CD8-positive, alpha-beta T cell (primary cell): ENCODE measurements at regions of chr4 and their contacts with region 1.

Region 1: GRCh38 chr4:77075869-77076799 is at the start of gene CCNI:
- DNase-seq: peak; percentile 85 to 97 (median 92)
- ATAC-seq: peak; percentile 70
- H3K4me3 ChIP-seq: peak within 1 kb of the TSS; percentile 90 to 98
- H3K4me3 Mint-ChIP-seq: no peak within 1 kb of the TSS
- H3K27ac ChIP-seq: peak within 1 kb of the TSS; percentile 99 to 100
- H3K27ac Mint-ChIP-seq: peak within 1 kb of the TSS; percentile 100
- H3K4me1 ChIP-seq: peaks cover 42% of the 10 kb centered on the region
- H3K4me1 Mint-ChIP-seq: peaks cover 46% of the 10 kb centered on the region
- H3K27me3 ChIP-seq: no peaks in the 10 kb centered on the region
- H3K27me3 Mint-ChIP-seq: no peaks in the 10 kb centered on the region
- CTCF ChIP-seq: no peak
- total RNA-seq, gene CCNI: 381 to 403 TPM

Region 2: GRCh38 chr4:76213415-76214176 is 862.5 kb before region 1 on chr4 and contains the start of gene SCARB2:
- CTCF ChIA-PET with region 1: no interaction called
- POLR2A ChIA-PET with region 1: no interaction called
- intact Hi-C with region 1: loop called (anchors 2 to 10 kb)
- DNase-seq: peak; percentile 44 to 91 (median 73)
- ATAC-seq: peak; percentile 64
- H3K4me3 ChIP-seq: peak within 1 kb of the TSS; percentile 71 to 75
- H3K4me3 Mint-ChIP-seq: peak within 1 kb of the TSS; percentile 89
- H3K27ac ChIP-seq: peak within 1 kb of the TSS; percentile 85
- H3K27ac Mint-ChIP-seq: peak within 1 kb of the TSS; percentile 95
- H3K4me1 ChIP-seq: peaks cover 29% of the 10 kb centered on the region
- H3K4me1 Mint-ChIP-seq: peaks cover 59% of the 10 kb centered on the region
- H3K27me3 ChIP-seq: no peaks in the 10 kb centered on the region
- H3K27me3 Mint-ChIP-seq: no peaks in the 10 kb centered on the region
- CTCF ChIP-seq: no peak
- total RNA-seq, gene SCARB2: 33.3 to 34.4 TPM

Region 3: GRCh38 chr4:76987153-76987587 is 89.0 kb before region 1 on chr4:
- CTCF ChIA-PET with region 1: no interaction called
- POLR2A ChIA-PET with region 1: no interaction called
- intact Hi-C with region 1: loop called in 1 of 2 experiments (anchors 1 kb)
- DNase-seq: no peak
- ATAC-seq: no peak
- H3K4me3 ChIP-seq: no peak overlapping the region
- H3K4me3 Mint-ChIP-seq: no peak overlapping the region
- H3K27ac ChIP-seq: no peak overlapping the region
- H3K27ac Mint-ChIP-seq: no peak overlapping the region
- H3K4me1 ChIP-seq: peaks cover 67% of the 10 kb centered on the region
- H3K4me1 Mint-ChIP-seq: peaks cover 89% of the 10 kb centered on the region
- H3K27me3 ChIP-seq: no peaks in the 10 kb centered on the region
- H3K27me3 Mint-ChIP-seq: no peaks in the 10 kb centered on the region
- CTCF ChIP-seq: no peak

Region 4: DNA sequence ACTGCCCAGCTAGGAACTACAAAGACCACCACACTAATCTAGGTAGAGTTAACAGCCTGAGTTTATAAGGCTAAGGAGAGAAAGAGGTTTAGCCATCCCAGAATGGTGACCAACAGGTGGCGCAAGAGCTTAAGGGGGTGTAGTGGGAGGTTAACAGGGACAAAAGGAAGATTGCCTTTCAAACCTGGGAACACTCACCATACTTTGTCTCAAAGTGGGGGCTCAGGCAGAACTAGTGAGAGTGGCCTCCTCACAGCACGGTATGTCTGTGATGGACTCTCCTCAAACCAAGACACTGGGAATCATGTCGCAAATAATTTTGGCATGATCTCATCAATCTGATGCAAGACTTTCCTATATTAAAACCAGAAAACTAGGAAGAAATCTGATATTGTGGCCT is 23.8 kb before region 1 on chr4:
- CTCF ChIA-PET with region 1: interaction called, 14 read pairs
- POLR2A ChIA-PET with region 1: no interaction called
- intact Hi-C with region 1: loop called (anchors 2 to 5 kb)
- DNase-seq: peak; percentile 30 to 75 (median 69)
- ATAC-seq: peak; percentile 52
- H3K4me3 ChIP-seq: no peak overlapping the region
- H3K4me3 Mint-ChIP-seq: no peak overlapping the region
- H3K27ac ChIP-seq: no peak overlapping the region
- H3K27ac Mint-ChIP-seq: no peak overlapping the region
- H3K4me1 ChIP-seq: no peaks in the 10 kb centered on the region
- H3K4me1 Mint-ChIP-seq: peaks cover 7% of the 10 kb centered on the region
- H3K27me3 ChIP-seq: no peaks in the 10 kb centered on the region
- H3K27me3 Mint-ChIP-seq: no peaks in the 10 kb centered on the region
- CTCF ChIP-seq: peak; percentile 45

Region 5: DNA sequence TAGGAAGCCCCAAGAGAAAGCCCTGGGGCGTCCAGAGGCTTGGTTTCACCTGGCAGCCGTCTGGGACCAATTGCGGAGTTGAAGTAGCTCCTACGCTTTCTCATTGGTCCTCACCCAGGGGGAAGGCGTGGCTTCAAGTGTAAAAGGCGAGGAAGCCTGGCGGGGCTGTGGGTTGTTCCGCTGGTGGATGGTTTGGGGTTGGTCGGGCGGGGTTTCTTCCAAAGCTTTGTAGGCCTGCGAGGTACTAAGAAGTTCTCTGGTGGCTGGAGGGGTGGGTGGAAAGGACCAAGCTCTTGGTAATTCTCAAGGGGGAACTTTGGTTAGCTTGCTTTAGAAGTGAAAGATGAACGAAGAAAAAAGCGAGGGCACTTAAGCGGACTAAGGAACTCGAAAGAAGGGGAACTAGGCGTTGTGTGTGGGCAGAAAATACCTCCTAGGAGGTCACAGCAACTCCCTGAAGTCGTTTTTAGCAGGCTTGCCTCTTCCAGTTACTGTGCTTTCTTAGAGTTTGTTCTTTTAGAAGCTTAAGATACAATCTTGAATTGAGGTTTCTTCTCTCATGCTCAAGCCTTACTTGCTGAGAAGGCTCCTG is 117.5 kb after region 1 on chr4:
- CTCF ChIA-PET with region 1: interaction called, 3 read pairs
- POLR2A ChIA-PET with region 1: interaction called, 6 read pairs
- intact Hi-C with region 1: loop called in 1 of 2 experiments (anchors 10 kb)
- DNase-seq: peak; percentile 31 to 83 (median 77)
- ATAC-seq: peak; percentile 99
- H3K4me3 ChIP-seq: peak overlapping the region; percentile 34 to 44
- H3K4me3 Mint-ChIP-seq: peak overlapping the region; percentile 91
- H3K27ac ChIP-seq: peak overlapping the region in 1 of 2 experiments; percentile 23
- H3K27ac Mint-ChIP-seq: peak overlapping the region; percentile 90
- H3K4me1 ChIP-seq: peaks cover 13% of the 10 kb centered on the region
- H3K4me1 Mint-ChIP-seq: peaks cover 17% of the 10 kb centered on the region
- H3K27me3 ChIP-seq: no peaks in the 10 kb centered on the region
- H3K27me3 Mint-ChIP-seq: peaks cover 4% of the 10 kb centered on the region
- CTCF ChIP-seq: no peak

Region 6: GRCh38 chr4:77327151-77327550 is 251.0 kb after region 1 on chr4:
- CTCF ChIA-PET with region 1: no interaction called
- POLR2A ChIA-PET with region 1: no interaction called
- intact Hi-C with region 1: no loop called
- DNase-seq: no peak
- ATAC-seq: no peak
- H3K4me3 ChIP-seq: no peak overlapping the region
- H3K4me3 Mint-ChIP-seq: no peak overlapping the region
- H3K27ac ChIP-seq: no peak overlapping the region
- H3K27ac Mint-ChIP-seq: no peak overlapping the region
- H3K4me1 ChIP-seq: no peaks in the 10 kb centered on the region
- H3K4me1 Mint-ChIP-seq: no peaks in the 10 kb centered on the region
- H3K27me3 ChIP-seq: no peaks in the 10 kb centered on the region
- H3K27me3 Mint-ChIP-seq: peaks cover 35% of the 10 kb centered on the region
- CTCF ChIP-seq: no peak

Region 7: DNA sequence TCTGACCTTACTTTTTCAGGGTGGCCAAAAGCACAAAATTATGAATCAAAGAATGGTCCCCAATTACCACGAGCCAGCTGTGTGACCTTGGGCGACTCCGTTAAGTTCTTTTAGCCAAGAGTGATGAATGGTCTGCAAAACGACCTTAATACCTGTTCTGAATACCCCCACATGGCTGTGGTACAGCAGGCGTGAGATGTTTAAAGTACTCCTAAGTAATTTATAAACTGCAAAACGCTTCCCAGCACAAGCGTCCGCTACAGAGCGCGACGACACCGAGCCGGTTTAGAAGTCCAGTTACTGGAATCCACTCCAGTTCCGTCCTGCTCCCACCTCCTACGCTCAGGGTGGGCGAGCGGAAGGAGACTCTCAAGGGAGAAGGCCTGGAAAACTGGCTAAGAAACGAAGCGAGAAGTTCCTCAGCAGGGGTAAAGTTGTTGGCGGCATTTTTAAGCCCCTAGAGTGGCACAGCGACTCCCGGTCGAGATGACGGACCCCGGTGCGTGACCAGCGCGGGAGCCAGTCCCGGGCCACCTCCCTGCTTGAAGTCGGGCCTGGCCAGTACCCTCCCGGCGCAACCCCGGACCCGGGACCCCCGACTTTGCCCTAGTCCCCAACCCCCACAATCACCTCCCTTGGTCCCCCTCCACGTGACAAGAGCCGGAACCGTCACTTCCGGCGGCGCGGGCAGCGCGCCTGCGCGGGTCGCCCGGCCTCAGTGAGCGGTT is 1699.3 kb after region 1 on chr4:
- CTCF ChIA-PET with region 1: no interaction called
- POLR2A ChIA-PET with region 1: no interaction called
- intact Hi-C with region 1: loop called (anchors 5 kb)
- DNase-seq: peak; percentile 75 to 93 (median 86)
- ATAC-seq: peak; percentile 57
- H3K4me3 ChIP-seq: peak overlapping the region; percentile 87
- H3K4me3 Mint-ChIP-seq: peak overlapping the region; percentile 92
- H3K27ac ChIP-seq: peak overlapping the region; percentile 82 to 87
- H3K27ac Mint-ChIP-seq: peak overlapping the region; percentile 94
- H3K4me1 ChIP-seq: peaks cover 17% of the 10 kb centered on the region
- H3K4me1 Mint-ChIP-seq: peaks cover 16% of the 10 kb centered on the region
- H3K27me3 ChIP-seq: no peaks in the 10 kb centered on the region
- H3K27me3 Mint-ChIP-seq: no peaks in the 10 kb centered on the region
- CTCF ChIP-seq: no peak